Activated T-helper 2 cell treated with anti-CD3 and anti-CD28 coated beads, Interferon-gamma antibody, Interleukin-2, Interleukin-4, amounts not matched to agents 10 μg/mL and 5 μg/mL and 100 μg/mL, durations not matched to agents 14 hours and 24 hours and 36 hours (primary cell): ENCODE measurements at regions of chr11 and their contacts with region 1.

Region 1: DNA sequence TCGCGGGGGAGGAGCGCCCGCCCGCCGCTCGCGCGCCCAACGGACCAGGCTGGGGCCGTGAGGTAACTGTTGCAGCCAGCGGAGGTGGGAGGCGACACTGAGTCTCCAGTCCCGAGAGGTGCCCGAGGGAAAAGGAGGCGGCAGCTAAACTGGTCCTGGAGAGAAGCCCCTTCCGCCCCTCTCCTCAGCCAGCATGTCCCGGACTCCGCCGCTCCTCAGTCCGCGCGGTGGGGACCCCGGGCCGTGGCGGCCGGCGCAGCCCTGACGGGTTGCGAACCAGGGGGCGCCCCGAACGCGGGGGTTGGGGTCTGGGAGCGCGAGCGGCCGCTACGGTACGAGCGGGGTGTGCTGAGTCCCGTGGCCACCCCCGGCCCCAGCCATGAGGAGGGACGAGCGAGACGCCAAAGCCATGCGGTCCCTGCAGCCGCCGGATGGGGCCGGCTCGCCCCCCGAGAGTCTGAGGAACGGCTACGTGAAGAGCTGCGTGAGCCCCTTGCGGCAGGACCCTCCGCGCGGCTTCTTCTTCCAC is at the start of gene PDE3B:
- DNase-seq: peak; percentile 75
- H3K4me3 Mint-ChIP-seq: peak within 1 kb of the TSS; percentile 93
- H3K27ac Mint-ChIP-seq: peak within 1 kb of the TSS; percentile 87
- H3K4me1 Mint-ChIP-seq: peaks cover 46% of the 10 kb centered on the region
- H3K27me3 Mint-ChIP-seq: no peaks in the 10 kb centered on the region
- total RNA-seq, gene PDE3B: 58.8 and 62.1 TPM in 2 replicates

Region 2: GRCh38 chr11:14320020-14320419 is 323.7 kb before region 1 on chr11:
- intact Hi-C with region 1: no loop called
- DNase-seq: peak; percentile 18
- H3K4me3 Mint-ChIP-seq: no peak overlapping the region
- H3K27ac Mint-ChIP-seq: peak overlapping the region; percentile 38
- H3K4me1 Mint-ChIP-seq: peaks cover 46% of the 10 kb centered on the region
- H3K27me3 Mint-ChIP-seq: no peaks in the 10 kb centered on the region

Region 3: GRCh38 chr11:14373931-14374646 is 269.7 kb before region 1 on chr11:
- intact Hi-C with region 1: loop called (anchors 10 kb)
- DNase-seq: no peak
- H3K4me3 Mint-ChIP-seq: no peak overlapping the region
- H3K27ac Mint-ChIP-seq: peak overlapping the region; percentile 78
- H3K4me1 Mint-ChIP-seq: peaks cover 63% of the 10 kb centered on the region
- H3K27me3 Mint-ChIP-seq: peaks cover 5% of the 10 kb centered on the region

Region 4: GRCh38 chr11:14499554-14500180 is 144.1 kb before region 1 on chr11 and contains the start of gene COPB1:
- intact Hi-C with region 1: loop called (anchors 1 kb)
- DNase-seq: peak; percentile 91
- H3K4me3 Mint-ChIP-seq: peak within 1 kb of the TSS; percentile 97
- H3K27ac Mint-ChIP-seq: peak within 1 kb of the TSS; percentile 96
- H3K4me1 Mint-ChIP-seq: peaks cover 40% of the 10 kb centered on the region
- H3K27me3 Mint-ChIP-seq: no peaks in the 10 kb centered on the region
- total RNA-seq, gene COPB1: 103 and 105 TPM in 2 replicates

Region 5: DNA sequence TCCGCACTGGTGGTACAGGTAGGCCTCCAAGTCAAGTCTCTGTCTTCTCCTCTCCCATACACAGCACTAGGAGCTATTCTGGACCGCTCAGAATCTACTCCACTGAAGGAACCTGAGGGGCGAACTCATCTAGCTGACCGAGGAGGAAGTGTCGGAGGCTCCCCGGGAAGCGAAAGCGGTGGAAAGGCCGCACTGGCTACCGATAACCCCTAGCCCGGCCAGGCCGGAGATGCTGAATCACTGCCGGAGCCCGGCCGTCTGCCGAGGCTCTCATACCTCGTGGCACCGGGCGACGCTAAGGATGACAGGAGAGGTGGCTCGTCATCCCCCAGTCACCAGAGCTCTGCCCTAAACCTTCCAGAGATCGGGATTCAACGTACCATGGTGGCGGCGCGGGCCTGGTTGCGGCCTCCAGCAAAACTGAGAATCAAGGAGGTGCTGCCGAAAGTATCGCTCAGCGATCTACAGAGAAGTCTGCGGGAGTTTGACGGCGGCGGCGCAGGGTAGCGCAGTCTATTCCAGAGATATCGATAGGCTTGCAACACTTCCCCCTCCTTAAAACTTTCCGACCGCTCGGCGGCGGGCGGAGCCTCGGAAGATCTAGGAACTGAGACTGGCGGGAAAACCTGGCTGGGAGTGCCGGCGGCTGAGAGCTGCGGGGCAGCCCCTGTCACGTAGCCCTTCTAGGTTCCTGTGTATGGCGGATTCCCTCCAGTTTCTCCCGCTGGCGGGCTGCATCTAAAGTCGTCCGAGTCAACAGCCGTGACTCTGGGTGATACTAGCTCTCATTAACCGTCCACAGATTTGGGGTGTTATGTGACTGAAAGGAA is 123.6 kb before region 1 on chr11 and contains the start of gene PSMA1:
- intact Hi-C with region 1: loop called (anchors 1 kb)
- DNase-seq: peak; percentile 92
- H3K4me3 Mint-ChIP-seq: peak within 1 kb of the TSS; percentile 90
- H3K27ac Mint-ChIP-seq: peak within 1 kb of the TSS; percentile 89
- H3K4me1 Mint-ChIP-seq: peaks cover 27% of the 10 kb centered on the region
- H3K27me3 Mint-ChIP-seq: no peaks in the 10 kb centered on the region
- total RNA-seq, gene PSMA1: 319 and 329 TPM in 2 replicates

Region 6: GRCh38 chr11:14537134-14537599 is 106.6 kb before region 1 on chr11:
- intact Hi-C with region 1: loop called (anchors 1 kb)
- DNase-seq: no peak
- H3K4me3 Mint-ChIP-seq: peak overlapping the region; percentile 63
- H3K27ac Mint-ChIP-seq: peak overlapping the region; percentile 74
- H3K4me1 Mint-ChIP-seq: peaks cover 28% of the 10 kb centered on the region
- H3K27me3 Mint-ChIP-seq: no peaks in the 10 kb centered on the region

Region 7: DNA sequence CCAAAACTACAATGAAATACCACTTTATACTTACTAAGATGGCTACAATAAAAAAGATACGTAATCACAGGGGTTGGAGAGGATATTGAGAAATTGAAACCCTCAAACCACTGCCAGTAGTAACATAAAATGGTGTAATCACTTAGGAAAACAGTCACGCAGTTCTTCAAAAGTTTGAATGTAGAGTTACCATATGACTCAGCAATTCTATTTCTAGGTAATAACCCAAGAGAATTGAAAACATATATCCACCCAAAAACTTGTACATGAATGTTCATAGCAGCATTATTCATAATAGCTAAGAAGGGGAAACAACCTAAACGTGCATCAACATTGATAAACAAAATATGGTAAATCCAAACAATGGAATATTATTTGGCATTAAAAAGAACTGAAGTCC is 99.2 kb before region 1 on chr11:
- intact Hi-C with region 1: loop called (anchors 1 kb)
- DNase-seq: no peak
- H3K4me3 Mint-ChIP-seq: no peak overlapping the region
- H3K27ac Mint-ChIP-seq: peak overlapping the region; percentile 80
- H3K4me1 Mint-ChIP-seq: peaks cover 42% of the 10 kb centered on the region
- H3K27me3 Mint-ChIP-seq: no peaks in the 10 kb centered on the region

Region 8: GRCh38 chr11:14892036-14892567 is 248.3 kb after region 1 on chr11 and contains the start of gene CYP2R1:
- intact Hi-C with region 1: loop called (anchors 1 kb)
- DNase-seq: peak; percentile 89
- H3K4me3 Mint-ChIP-seq: peak within 1 kb of the TSS; percentile 88
- H3K27ac Mint-ChIP-seq: peak within 1 kb of the TSS; percentile 98
- H3K4me1 Mint-ChIP-seq: peaks cover 53% of the 10 kb centered on the region
- H3K27me3 Mint-ChIP-seq: no peaks in the 10 kb centered on the region
- total RNA-seq, gene CYP2R1: 18.2 and 20.8 TPM in 2 replicates